ENCODE measurements at regions of chr11 and their contacts with region 1.

Region 1: GRCh38 chr11:7098235-7098832 is 9.5 kb downstream of the RBMXL2 start:
- DNase-seq: peak; percentile 35 to 60
- ATAC-seq: peak; percentile 90 to 95
- H3K4me3 ChIP-seq: no peak overlapping the region
- H3K27ac ChIP-seq: no peak overlapping the region
- H3K4me1 ChIP-seq: no peaks in the 10 kb centered on the region
- CTCF ChIP-seq: peak; percentile 87
- EP300 ChIP-seq: no peak
- POLR2A ChIP-seq: no peak
- RAD21 ChIP-seq: peak; percentile 87 to 91

Region 2: DNA sequence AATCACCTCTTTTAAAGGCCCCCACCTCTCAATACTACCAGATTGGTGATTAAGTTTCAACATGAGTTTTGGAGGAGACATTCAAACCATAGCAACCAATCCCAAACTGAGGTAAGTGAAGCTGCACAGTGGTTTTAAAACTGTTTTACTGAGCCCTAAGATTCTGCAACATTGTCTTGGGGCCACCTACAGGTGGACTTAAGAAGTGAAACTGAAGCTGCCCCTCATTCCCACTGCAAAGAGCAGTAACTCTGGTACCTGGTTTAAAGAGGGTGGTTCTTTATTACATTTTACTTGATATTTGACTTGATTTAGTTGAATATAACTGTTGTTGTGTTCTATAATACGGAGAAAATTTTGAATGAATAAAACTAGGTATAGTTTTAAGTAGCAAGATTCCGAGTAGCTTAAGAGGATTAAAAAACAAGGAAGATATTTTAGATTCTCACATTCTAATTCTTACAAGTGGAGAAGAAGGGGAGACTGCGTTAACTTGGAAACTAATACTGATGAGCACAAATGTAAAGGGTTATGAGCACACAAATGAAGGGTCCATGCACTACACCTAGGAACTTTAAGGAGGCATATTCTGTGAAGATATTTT is 180.1 kb after region 1 on chr11:
- CTCF ChIA-PET with region 1: interaction called, 13 read pairs
- POLR2A ChIA-PET with region 1: no interaction called
- DNase-seq: peak; percentile 42 to 50
- ATAC-seq: peak; percentile 81 to 90; a peak in 5 of 6 replicates
- H3K4me3 ChIP-seq: no peak overlapping the region
- H3K27ac ChIP-seq: no peak overlapping the region
- H3K4me1 ChIP-seq: no peaks in the 10 kb centered on the region
- CTCF ChIP-seq: peak; percentile 53
- EP300 ChIP-seq: no peak
- POLR2A ChIP-seq: no peak
- RAD21 ChIP-seq: peak; percentile 57 to 62; a peak in 4 of 5 replicates

Region 3: DNA sequence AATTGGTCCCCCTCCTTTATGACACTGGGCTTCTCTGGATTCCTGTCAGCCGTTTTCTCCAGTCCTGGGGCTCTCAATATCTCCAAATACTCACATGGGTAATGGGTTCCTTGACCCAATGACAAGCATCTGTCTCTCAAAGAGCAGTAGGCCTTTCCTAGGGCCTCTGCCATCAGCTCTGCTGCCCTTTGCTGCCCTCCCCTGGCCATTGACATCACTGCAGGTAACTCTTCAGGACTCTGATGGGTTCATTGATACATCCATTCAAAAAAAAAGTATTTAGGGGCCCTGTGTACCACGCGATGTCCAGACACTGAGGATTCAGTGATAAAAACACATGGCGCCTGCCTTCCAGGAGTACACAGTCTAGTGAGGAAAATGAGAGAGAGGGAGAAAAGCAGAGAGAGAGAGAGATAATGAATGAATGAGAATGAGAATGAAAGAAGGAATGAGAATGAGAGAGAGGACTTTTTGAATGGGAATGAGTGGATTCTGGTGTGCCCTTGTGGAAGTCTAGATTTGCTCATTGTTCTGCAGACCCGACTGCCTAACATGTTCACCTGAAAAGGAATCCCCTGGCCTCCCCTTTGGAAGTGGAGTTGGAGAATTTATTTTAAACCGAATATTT is 344.4 kb after region 1 on chr11:
- CTCF ChIA-PET with region 1: interaction called, 40 read pairs
- POLR2A ChIA-PET with region 1: no interaction called
- DNase-seq: peak; percentile 54 to 56
- ATAC-seq: peak; percentile 80 to 95
- H3K4me3 ChIP-seq: no peak overlapping the region
- H3K27ac ChIP-seq: no peak overlapping the region
- H3K4me1 ChIP-seq: no peaks in the 10 kb centered on the region
- CTCF ChIP-seq: peak; percentile 73
- EP300 ChIP-seq: no peak
- POLR2A ChIP-seq: no peak
- RAD21 ChIP-seq: peak; percentile 73 to 83

Region 4: DNA sequence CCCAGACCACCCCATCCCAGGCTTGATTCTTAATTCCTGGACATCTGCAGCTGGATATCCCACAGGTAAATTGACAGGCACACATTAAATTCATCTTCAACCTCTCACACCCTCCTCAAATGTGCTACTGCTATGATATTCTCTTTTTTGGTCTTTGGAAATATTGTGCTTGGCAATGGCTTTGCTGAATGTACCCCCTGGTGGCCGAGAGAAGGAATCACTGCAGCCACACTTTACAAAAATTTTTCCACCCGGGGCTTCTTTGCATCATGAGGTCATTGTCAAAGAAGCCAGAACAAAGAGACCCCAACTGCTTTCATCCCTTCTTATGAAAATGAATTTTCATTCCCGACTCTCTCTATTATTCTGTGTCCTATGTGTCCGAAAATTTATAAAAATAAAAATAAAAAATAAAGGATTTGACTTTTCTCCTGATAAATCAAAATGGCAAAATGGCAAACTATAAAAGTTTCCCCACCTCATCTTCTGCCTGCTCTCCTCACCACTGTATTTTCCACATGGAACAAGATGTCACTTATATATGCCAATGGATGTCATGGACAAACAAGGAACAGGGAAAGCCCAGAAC is 590.0 kb after region 1 on chr11:
- CTCF ChIA-PET with region 1: interaction called, 31 read pairs
- POLR2A ChIA-PET with region 1: no interaction called
- DNase-seq: peak; percentile 44 to 50
- ATAC-seq: peak; percentile 39 to 75; a peak in 3 of 6 replicates
- H3K4me3 ChIP-seq: no peak overlapping the region
- H3K27ac ChIP-seq: no peak overlapping the region
- H3K4me1 ChIP-seq: no peaks in the 10 kb centered on the region
- CTCF ChIP-seq: peak; percentile 74
- EP300 ChIP-seq: no peak
- POLR2A ChIP-seq: no peak
- RAD21 ChIP-seq: peak; percentile 66 to 69

Region 5: DNA sequence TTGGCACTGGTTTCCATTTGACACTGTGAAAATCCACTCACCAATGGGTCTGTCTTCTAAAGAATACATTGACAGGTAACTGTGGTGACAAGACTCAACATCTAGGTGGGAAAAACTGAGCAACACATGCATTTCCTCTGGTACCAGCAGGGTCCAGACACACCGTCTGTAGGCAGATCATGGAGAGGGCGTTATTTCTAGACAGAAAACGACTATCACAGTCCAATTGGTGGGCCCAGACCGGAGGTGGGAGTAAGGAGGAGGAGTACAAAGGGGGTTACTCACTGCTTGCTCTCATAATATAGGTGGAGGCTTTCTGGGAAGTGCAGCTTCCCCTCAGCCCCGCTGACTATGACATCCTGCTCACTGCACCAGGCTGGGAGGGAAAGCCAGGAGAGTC is 598.1 kb after region 1 on chr11:
- CTCF ChIA-PET with region 1: interaction called, 31 read pairs
- POLR2A ChIA-PET with region 1: no interaction called
- DNase-seq: no peak
- ATAC-seq: no peak
- H3K4me3 ChIP-seq: no peak overlapping the region
- H3K27ac ChIP-seq: no peak overlapping the region
- H3K4me1 ChIP-seq: no peaks in the 10 kb centered on the region
- CTCF ChIP-seq: no peak
- EP300 ChIP-seq: no peak
- POLR2A ChIP-seq: no peak
- RAD21 ChIP-seq: no peak